GM18951 (cell line): ENCODE measurements at regions of chr18 and their contacts with region 1.

Region 1: GRCh38 chr18:57833443-57834101 is 30.5 kb upstream of the ATP8B1 start:
- POLR2A ChIP-seq: no peak

Region 2: DNA sequence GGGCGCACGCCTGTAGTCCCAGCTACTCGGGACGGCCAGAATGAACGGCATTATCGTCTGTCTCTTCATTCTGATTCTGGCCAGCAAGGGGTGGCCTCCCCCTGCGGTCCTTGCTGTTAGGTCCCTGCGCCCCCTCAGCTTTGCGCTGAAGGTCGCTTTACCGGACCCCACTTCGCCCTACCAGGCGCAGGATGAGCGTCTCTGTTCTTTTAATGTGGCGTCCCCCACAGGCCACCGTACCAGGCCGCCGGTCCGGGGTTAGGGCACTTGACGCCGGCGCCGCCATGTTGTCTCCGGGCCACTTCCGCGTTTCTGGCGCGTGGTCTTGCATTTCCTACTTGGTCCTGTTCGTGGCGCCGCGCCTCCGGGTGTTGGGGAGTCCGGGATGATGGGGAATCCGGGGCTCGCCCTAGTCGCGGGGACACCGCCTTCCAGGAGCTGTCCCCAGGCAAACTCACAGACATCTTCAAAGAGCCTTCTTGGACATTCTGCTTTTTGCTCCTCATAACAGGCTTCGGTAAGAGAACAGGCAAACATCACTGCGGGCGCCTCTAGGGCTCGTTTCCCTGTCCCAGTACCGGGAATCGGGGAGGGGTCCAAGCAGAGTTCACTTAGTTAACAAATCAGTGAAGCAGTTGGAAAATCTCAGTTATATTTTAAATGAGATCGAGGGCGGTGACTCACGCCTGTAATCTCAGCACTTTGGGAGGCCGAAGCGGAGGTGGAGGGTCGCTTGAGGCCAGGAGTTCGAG is 203.4 kb before region 1 on chr18:
- in situ Hi-C with region 1: loop called (anchors 25 kb)
- POLR2A ChIP-seq: peak; percentile 62